ENCODE measurements at regions of chr14 and their contacts with region 1.

Region 1: GRCh38 chr14:69441948-69442347 is 42.6 kb upstream of the PLEKHD1 start:
- DNase-seq: peak; percentile 58
- ATAC-seq: peak; percentile 95
- H3K4me3 ChIP-seq: no peak overlapping the region
- H3K27ac ChIP-seq: peak overlapping the region; percentile 65
- H3K4me1 ChIP-seq: peaks cover 4% of the 10 kb centered on the region; the same call in 1 of the 2 replicates
- H3K27me3 ChIP-seq: no peaks in the 10 kb centered on the region
- CTCF ChIP-seq: no peak
- EP300 ChIP-seq: no peak
- POLR2A ChIP-seq: peak; percentile 57
- RAD21 ChIP-seq: no peak

Region 2: DNA sequence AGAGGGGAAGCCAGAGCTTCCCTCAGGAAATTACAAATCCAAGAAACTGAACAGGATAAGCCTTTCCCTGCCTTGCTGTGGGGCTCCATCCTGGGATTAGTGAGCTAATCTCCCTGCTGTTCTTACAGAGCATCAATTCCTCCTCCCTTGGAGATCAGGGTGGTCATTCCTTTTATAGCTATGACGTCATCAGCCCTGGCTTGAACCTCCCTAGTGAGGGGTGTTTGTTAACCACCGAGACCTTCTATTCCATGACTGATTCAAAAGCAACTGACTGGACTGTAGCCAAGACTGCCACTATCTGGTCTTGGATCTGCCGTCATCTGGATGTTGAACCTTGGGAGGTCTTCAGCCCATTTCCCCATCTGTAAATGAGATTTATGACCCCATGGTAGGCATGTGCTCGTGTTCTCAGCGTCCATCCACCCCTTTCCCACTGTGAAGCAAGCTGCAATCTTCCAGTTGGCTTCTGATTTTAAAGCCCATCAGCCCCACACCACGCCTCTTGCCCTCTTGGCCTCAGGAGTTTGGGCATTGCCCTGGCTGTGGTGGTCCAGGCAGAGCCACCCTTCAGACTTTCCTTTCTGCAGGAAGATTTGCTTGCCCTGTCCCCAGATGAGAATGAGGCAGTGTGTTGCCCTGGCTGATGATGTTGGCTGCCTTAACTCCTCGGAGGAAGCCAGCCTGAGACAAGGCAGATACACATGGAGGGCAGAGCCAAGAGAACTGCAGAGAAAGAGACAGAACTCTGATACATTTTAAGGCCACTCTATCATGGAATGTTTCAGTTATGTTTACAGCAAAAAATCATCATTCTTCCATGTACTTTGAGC is 403.3 kb before region 1 on chr14:
- CTCF ChIA-PET with region 1: no interaction called
- POLR2A ChIA-PET with region 1: no interaction called
- RAD21 ChIA-PET with region 1: no interaction called
- SMC1A ChIA-PET with region 1: no interaction called
- in situ Hi-C with region 1: no loop called
- intact Hi-C with region 1: no loop called
- DNase-seq: no peak
- ATAC-seq: no peak
- H3K4me3 ChIP-seq: no peak overlapping the region
- H3K27ac ChIP-seq: no peak overlapping the region
- H3K4me1 ChIP-seq: no peaks in the 10 kb centered on the region
- H3K27me3 ChIP-seq: peaks cover 1 to 7% of the 10 kb centered on the region in 2 experiments; a peak in 3 of 4 replicates
- CTCF ChIP-seq: no peak
- EP300 ChIP-seq: no peak
- POLR2A ChIP-seq: no peak
- RAD21 ChIP-seq: no peak

Region 3: GRCh38 chr14:69354383-69355153 is 87.4 kb before region 1 on chr14:
- CTCF ChIA-PET with region 1: no interaction called
- POLR2A ChIA-PET with region 1: interaction called, 11 read pairs
- RAD21 ChIA-PET with region 1: interaction called, 5 read pairs
- SMC1A ChIA-PET with region 1: interaction called, 10 read pairs
- in situ Hi-C with region 1: no loop called
- intact Hi-C with region 1: no loop called
- DNase-seq: peak; percentile 87
- ATAC-seq: peak; percentile 90
- H3K4me3 ChIP-seq: peak overlapping the region; percentile 48; the same call in 1 of the 2 replicates
- H3K27ac ChIP-seq: peak overlapping the region; percentile 99
- H3K4me1 ChIP-seq: peaks cover 56% of the 10 kb centered on the region
- H3K27me3 ChIP-seq: no peaks in the 10 kb centered on the region
- CTCF ChIP-seq: no peak
- EP300 ChIP-seq: peak; percentile 28 to 58; a peak in 2 of 4 replicates
- POLR2A ChIP-seq: peak; percentile 78
- RAD21 ChIP-seq: no peak; the same call in 1 of the 2 replicates

Region 4: DNA sequence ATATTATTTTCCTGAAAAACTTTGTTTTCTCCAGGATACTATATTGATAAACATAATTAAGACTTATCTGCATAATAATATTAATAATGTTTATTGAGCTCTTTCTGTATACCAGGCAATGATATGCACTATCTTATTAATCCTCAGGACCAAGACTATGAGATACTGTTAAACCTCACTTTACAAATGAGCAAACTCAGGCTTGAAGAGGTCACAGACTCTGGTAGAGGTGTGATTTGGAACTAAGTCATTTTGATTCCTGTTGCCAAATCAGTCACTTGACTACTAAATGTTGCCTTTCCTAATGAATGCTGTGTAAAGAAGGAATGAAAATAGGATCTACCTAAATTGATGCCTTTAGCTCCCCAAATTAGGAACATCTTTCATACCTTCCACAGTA is 36.2 kb before region 1 on chr14:
- CTCF ChIA-PET with region 1: interaction called, 4 read pairs
- POLR2A ChIA-PET with region 1: interaction called, 5 read pairs
- RAD21 ChIA-PET with region 1: interaction called, 7 read pairs
- SMC1A ChIA-PET with region 1: interaction called, 18 read pairs
- in situ Hi-C with region 1: no loop called
- intact Hi-C with region 1: loop called (anchors 2 kb)
- DNase-seq: no peak
- ATAC-seq: peak; percentile 29; the same call in 1 of the 3 replicates
- H3K4me3 ChIP-seq: no peak overlapping the region
- H3K27ac ChIP-seq: no peak overlapping the region
- H3K4me1 ChIP-seq: no peaks in the 10 kb centered on the region
- H3K27me3 ChIP-seq: no peaks in the 10 kb centered on the region
- CTCF ChIP-seq: no peak
- EP300 ChIP-seq: no peak
- POLR2A ChIP-seq: no peak
- RAD21 ChIP-seq: no peak

Measured in GM12878 (cell line).